Activated CD4-positive, alpha-beta T cell treated with anti-CD3 and anti-CD28 coated beads, Interleukin-2, amount 10 ng/mL, durations not matched to agents 24 days and 14 days (primary cell): ENCODE measurements at regions of chr15 and their contacts with region 1.

Region 1: GRCh38 chr15:70140543-70141375 is 43.0 kb upstream of the TLE3 start:
- DNase-seq: peak; percentile 78
- H3K4me3 Mint-ChIP-seq: peak overlapping the region; percentile 3
- H3K27ac Mint-ChIP-seq: peak overlapping the region; percentile 59
- H3K4me1 Mint-ChIP-seq: peaks cover 28% of the 10 kb centered on the region
- H3K27me3 Mint-ChIP-seq: peaks cover 38% of the 10 kb centered on the region

Region 2: GRCh38 chr15:70299931-70300869 is 159.4 kb after region 1 on chr15:
- intact Hi-C with region 1: loop called (anchors 5 kb)
- DNase-seq: peak; percentile 89
- H3K4me3 Mint-ChIP-seq: no peak overlapping the region
- H3K27ac Mint-ChIP-seq: peak overlapping the region; percentile 41
- H3K4me1 Mint-ChIP-seq: peaks cover 9% of the 10 kb centered on the region
- H3K27me3 Mint-ChIP-seq: peaks cover 22% of the 10 kb centered on the region